Activated CD4-positive, alpha-beta memory T cell treated with anti-CD3 and anti-CD28 coated beads, Interleukin-2, amount 10 ng/mL, durations not matched to agents 7 days and 5 days (primary cell): ENCODE measurements at regions of chr14 and their contacts with region 1.

Region 1: DNA sequence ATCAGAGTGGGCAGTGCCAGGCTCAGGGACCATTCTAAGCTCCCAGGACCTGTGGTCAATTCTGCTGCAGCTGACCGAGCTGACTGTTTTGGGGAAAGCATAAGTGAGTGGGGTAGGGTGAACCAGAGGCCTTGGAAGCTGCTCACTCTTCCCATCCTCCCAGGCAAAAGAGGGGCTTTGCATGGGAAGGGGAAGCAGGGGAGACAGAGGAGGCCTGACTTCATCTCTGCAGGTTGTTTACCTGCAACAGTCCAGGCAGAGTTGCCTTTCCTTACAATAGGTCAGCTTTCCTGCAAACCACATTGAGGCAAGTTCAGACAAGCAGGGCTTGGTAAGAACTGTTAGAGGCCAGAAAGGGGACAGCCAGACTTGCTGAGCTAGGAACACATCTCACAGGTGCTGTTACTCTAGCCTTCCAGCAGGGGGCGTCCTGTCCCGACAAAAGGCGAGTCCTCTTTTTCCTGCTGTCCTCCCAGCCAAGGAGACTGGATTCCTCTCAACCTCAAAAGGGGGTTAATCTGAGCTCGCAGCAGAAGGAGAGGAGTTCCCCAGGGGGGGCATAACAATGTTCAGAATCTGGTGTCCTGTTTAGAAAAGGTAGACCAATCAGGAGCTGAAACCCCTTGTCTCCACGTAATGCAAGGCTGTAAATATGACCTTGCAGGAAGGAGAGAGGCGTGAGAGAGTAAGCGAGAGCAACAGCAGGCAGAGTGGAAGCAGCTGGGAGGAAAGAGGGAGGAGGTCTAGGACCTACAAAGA is 4.3 kb upstream of the DHRS2 start:
- DNase-seq: peak; percentile 71
- H3K4me3 Mint-ChIP-seq: no peak overlapping the region
- H3K27ac Mint-ChIP-seq: no peak overlapping the region
- H3K4me1 Mint-ChIP-seq: peaks cover 12% of the 10 kb centered on the region
- H3K27me3 Mint-ChIP-seq: peaks cover 5% of the 10 kb centered on the region

Region 2: DNA sequence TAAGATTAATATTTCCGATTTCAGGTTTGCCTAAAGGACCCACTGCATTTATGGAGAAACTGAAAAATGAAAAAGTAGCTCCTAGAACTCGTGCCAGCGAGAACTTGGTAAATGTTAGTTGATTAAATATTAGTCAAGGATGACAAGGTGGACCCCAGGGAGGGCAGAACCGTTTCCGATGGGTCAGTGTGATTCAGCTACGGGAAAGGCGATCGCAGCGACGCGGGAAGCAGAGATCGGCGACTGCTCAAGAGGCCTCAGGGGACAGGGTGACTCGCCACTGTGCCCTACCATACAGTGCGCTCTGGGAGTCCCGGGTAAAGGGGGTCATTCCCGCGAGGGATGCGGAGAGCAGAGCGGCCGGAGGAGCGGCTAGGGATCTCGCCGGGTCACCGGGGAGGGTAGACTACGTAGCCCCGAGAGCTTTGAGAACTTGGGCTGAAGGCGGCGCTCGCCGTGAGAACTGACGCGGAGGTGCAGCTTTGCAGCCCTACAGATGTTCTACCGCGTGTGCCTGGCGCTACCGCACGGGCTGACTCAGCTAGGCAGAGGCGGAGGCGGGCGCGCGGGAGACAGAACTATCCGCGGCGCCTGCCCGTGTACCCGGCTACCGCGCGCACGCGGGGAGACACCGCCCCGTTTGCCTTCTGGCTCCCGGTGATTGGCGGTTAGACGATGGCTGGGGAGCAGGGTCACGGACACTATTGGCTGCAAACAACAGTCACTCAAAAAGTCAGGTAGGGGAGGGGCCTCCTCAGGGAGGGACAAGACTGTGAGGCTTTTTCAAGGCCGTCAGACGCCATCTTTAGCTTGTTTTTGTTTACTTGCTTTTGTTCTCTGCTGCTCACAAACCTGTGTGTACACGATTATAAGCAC is 625.1 kb before region 1 on chr14:
- CTCF ChIA-PET with region 1: no interaction called
- POLR2A ChIA-PET with region 1: no interaction called
- DNase-seq: peak; percentile 98
- H3K4me3 Mint-ChIP-seq: peak overlapping the region; percentile 93
- H3K27ac Mint-ChIP-seq: peak overlapping the region; percentile 94
- H3K4me1 Mint-ChIP-seq: peaks cover 51% of the 10 kb centered on the region
- H3K27me3 Mint-ChIP-seq: no peaks in the 10 kb centered on the region

Region 3: DNA sequence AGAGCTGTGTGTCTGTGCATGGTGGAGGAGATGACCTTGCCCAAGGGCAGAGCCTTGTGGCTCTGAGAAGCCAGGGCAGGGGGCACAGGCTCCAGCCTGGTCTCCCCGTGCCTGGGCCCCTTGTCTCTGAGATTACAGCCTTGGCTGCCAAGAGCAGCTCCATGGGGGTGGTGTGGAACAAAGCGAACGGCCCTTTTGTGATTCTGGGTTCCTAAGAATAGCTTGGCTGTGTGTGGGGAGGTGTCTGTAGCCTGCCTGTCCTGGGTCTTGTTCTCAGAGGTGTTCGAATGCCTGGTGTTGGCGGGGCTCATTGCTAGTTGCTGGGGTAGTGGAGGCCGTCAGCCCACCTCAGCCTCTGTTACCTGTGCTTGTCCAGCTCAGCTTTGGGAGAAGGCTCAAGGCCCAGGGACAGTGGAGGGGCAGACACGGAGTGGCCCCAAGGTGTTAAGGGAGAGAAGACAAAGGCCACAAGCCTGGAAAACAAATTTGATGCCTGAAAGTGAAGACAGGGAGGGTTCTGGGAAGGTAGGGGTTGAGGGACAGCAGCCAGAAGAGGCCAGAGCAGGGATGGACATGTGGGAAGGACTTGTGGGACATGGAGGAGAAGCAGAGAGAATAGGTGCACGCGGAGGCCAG is 189.0 kb before region 1 on chr14:
- CTCF ChIA-PET with region 1: no interaction called
- POLR2A ChIA-PET with region 1: no interaction called
- DNase-seq: peak; percentile 12
- H3K4me3 Mint-ChIP-seq: no peak overlapping the region
- H3K27ac Mint-ChIP-seq: no peak overlapping the region
- H3K4me1 Mint-ChIP-seq: peaks cover 8% of the 10 kb centered on the region
- H3K27me3 Mint-ChIP-seq: peaks cover 4% of the 10 kb centered on the region

Region 4: GRCh38 chr14:23478111-23478759 is 153.6 kb before region 1 on chr14:
- CTCF ChIA-PET with region 1: no interaction called
- POLR2A ChIA-PET with region 1: no interaction called
- DNase-seq: peak; percentile 71
- H3K4me3 Mint-ChIP-seq: no peak overlapping the region
- H3K27ac Mint-ChIP-seq: no peak overlapping the region
- H3K4me1 Mint-ChIP-seq: peaks cover 2% of the 10 kb centered on the region
- H3K27me3 Mint-ChIP-seq: no peaks in the 10 kb centered on the region

Region 5: DNA sequence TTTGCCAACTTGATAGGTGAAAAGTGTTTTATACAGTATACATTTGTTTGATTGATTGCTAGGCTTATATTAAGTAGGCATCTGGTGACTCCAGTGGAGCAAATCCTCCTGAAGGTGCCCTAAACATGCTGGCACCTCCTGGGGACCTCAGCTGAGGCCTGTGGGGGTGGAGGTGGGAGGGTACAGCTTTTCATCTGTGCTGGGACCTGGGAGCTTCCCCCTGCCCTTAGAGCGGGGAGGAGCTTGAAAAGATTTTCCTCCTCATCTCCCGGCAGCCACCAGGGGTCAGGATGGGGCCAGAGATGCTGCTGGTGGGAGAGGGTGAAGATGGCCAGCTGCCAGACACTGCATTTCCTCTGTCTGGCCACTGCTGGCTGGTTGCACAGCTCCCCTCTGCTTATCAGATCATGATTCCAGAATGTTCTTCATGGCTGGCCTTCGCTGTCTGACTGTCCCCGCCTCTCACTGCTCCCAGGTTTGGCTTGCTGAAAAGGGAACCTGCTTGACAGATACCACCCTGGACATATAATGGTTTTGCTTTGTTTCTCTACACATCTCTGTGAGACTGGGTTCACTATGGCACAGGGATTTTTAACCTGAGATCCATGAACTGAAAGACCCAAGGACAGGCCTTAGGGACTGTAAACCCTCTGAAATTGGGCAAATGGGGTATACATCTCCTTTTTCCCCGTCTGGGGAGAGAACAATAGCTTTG is 42.8 kb before region 1 on chr14:
- CTCF ChIA-PET with region 1: interaction called, 64 read pairs
- POLR2A ChIA-PET with region 1: no interaction called
- DNase-seq: peak; percentile 81
- H3K4me3 Mint-ChIP-seq: no peak overlapping the region
- H3K27ac Mint-ChIP-seq: no peak overlapping the region
- H3K4me1 Mint-ChIP-seq: peaks cover 2% of the 10 kb centered on the region
- H3K27me3 Mint-ChIP-seq: peaks cover 14% of the 10 kb centered on the region

Region 6: GRCh38 chr14:23615856-23616255 is 16.0 kb before region 1 on chr14:
- CTCF ChIA-PET with region 1: interaction called, 56 read pairs
- POLR2A ChIA-PET with region 1: interaction called, 5 read pairs
- DNase-seq: no peak
- H3K4me3 Mint-ChIP-seq: no peak overlapping the region
- H3K27ac Mint-ChIP-seq: no peak overlapping the region
- H3K4me1 Mint-ChIP-seq: peaks cover 4% of the 10 kb centered on the region
- H3K27me3 Mint-ChIP-seq: peaks cover 3% of the 10 kb centered on the region

Region 7: DNA sequence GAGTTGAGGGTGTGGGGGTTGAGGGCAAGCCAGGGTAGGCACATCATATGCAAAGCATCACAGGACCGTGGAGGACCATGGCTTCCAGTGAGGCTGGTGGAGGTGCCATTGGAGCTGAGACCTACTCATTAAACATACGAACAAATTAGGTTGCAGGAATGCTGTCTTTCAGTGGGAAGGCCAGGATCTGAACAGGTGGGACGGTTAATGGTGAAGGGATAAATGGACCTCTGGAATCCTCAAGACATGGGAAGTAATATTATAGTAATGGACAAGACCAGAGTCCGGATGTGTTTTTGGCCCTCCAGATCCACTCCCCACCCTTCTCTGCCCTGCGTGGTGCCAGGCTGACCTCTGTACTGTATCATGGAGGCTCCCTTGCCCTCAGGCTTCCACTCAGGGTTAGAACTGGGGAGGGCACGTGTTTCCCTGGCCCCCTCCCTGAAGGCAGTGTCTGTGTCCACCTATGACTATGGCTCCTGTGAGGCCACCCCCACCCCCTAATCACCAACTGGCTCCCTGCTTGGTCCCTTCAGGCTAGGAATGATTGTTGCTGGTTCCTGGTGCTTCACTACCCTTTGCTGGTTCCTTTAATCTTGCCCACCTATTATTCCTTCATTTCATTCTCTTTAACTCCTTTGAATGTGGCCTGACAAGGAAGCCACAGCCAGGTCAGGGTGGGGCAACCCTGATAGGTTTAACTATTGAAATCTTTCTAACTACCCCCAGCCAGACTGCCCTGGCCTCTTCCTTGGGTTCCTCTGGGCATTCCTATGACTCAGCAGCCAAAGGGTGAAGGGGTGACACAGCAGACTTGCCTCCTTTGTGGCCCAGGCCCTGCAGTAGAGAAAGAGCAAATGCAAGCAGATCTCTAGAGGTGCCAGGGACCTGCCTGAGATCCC is 15.0 kb after region 1 on chr14:
- CTCF ChIA-PET with region 1: interaction called, 28 read pairs
- POLR2A ChIA-PET with region 1: interaction called, 3 read pairs
- DNase-seq: no peak
- H3K4me3 Mint-ChIP-seq: no peak overlapping the region
- H3K27ac Mint-ChIP-seq: no peak overlapping the region
- H3K4me1 Mint-ChIP-seq: peaks cover 14% of the 10 kb centered on the region
- H3K27me3 Mint-ChIP-seq: peaks cover 3% of the 10 kb centered on the region

Region 8: GRCh38 chr14:23665375-23666192 is 33.7 kb after region 1 on chr14:
- CTCF ChIA-PET with region 1: interaction called, 24 read pairs
- POLR2A ChIA-PET with region 1: no interaction called
- DNase-seq: no peak
- H3K4me3 Mint-ChIP-seq: no peak overlapping the region
- H3K27ac Mint-ChIP-seq: no peak overlapping the region
- H3K4me1 Mint-ChIP-seq: no peaks in the 10 kb centered on the region
- H3K27me3 Mint-ChIP-seq: peaks cover 7% of the 10 kb centered on the region

Region 9: DNA sequence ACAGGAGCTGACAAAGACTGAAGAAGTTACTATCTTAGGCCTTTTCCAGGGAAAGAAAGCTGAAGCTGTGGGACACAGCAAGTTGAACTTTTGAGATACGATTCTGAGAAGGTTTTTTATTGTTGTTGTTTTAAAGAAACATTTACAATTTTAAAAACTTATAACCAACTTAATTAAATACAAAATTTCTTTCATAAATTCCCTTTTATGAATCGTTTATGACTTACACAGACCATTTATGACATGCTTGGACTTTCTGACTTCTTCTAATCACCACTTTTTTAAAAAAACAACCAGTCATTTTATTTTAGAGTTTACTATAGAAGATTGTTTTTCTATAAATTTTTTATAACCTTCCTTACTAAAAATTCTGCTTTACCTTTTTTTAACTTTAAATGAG is 73.0 kb after region 1 on chr14:
- CTCF ChIA-PET with region 1: no interaction called
- POLR2A ChIA-PET with region 1: no interaction called
- DNase-seq: no peak
- H3K4me3 Mint-ChIP-seq: no peak overlapping the region
- H3K27ac Mint-ChIP-seq: no peak overlapping the region
- H3K4me1 Mint-ChIP-seq: no peaks in the 10 kb centered on the region
- H3K27me3 Mint-ChIP-seq: peaks cover 11% of the 10 kb centered on the region

Region 10: DNA sequence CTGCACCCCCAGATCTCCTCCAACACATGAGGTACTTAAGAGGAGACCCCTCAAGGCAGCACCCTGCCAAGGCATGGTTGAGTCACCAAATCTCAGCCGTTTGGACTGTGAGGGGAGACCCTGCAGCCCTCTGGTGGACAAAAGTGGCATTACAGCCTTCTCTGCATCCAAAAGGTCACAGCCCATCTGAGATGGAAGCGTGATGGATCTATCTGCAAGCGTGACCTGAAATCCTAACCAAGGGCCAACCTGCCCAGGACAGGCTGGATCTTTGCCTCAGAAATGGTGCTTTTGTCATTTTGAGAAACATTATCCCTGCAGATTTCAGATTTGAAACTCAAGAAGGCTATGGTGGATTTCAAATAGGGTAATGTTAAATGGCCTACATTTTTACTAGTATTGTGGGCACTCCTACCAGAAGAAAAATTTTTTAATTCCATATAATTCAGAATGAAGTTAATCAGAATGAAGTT is 298.0 kb after region 1 on chr14:
- CTCF ChIA-PET with region 1: interaction called, 19 read pairs
- POLR2A ChIA-PET with region 1: no interaction called
- DNase-seq: peak; percentile 81
- H3K4me3 Mint-ChIP-seq: no peak overlapping the region
- H3K27ac Mint-ChIP-seq: no peak overlapping the region
- H3K4me1 Mint-ChIP-seq: no peaks in the 10 kb centered on the region
- H3K27me3 Mint-ChIP-seq: peaks cover 7% of the 10 kb centered on the region